GM12878 (cell line): ENCODE measurements at regions of chr4 and their contacts with region 1.

Region 1: DNA sequence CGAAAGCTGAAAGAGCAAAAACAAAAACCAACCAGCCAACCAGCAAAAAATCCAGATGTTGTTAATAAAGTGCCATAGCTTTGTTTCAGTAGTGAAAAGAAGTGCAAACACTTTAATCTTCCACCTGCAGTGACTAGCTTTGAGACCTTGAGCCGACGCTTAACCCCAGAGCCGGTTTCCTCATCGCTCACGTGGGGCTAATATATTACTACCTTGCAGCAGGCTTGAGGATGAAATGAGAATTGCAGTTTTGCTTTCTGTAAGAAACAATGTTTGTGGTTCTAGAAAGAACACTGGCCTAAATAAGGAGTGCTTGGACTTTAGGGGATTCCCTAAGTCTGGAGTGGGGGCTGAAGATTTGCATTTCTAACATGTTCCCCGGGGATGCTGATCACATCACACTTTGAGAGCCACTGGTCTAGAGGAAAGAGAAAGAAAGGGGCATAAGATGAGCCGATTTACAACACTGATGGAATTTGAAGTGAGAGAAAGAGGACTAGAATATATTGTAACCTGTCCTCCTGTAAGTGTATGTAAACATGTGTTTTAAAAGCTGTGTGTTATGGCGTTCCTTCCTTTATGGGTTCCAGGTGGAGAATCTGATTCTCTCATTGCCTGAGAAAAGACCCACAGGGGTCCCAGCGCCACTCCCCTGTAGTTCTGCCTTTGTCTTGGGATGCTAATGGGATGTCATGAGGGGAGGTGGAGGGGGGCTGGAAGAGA is 1.4 kb downstream of the FGF2 start:
- DNase-seq: peak; percentile 80
- ATAC-seq: peak; percentile 93
- H3K4me3 ChIP-seq: peak overlapping the region; percentile 67
- H3K27ac ChIP-seq: peak overlapping the region; percentile 47
- H3K4me1 ChIP-seq: peaks cover 3% of the 10 kb centered on the region; the same call in 1 of the 2 replicates
- H3K27me3 ChIP-seq: no peaks in the 10 kb centered on the region; a peak in 1 of 4 replicates
- CTCF ChIP-seq: peak in 2 of 3 experiments; percentile 8 to 24; a peak in 1 of 6 replicates
- EP300 ChIP-seq: peak in 1 of 2 experiments; percentile 55; a peak in 1 of 4 replicates
- POLR2A ChIP-seq: no peak
- RAD21 ChIP-seq: no peak

Region 2: DNA sequence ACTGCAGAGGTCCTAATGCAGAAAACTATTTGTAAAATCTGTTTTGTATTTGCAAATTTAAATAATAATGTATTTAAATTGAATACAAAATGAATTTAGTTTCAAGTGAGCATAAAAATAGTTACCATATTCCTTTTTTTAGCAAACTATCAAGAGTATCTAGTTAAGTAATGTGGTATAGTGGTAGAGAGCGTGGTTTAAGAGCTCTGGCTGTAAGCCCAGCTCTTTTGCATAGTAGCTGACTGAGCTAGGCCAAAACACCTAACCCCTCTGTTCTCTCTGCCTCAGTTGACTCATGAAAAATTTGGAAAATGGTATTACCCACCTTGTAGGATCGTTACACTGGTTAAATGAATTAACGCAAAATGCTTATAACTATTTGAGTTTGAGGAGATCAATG is 467.3 kb before region 1 on chr4:
- CTCF ChIA-PET with region 1: no interaction called
- POLR2A ChIA-PET with region 1: no interaction called
- RAD21 ChIA-PET with region 1: no interaction called
- SMC1A ChIA-PET with region 1: no interaction called
- in situ Hi-C with region 1: no loop called
- intact Hi-C with region 1: no loop called
- DNase-seq: no peak
- ATAC-seq: no peak
- H3K4me3 ChIP-seq: no peak overlapping the region
- H3K27ac ChIP-seq: no peak overlapping the region
- H3K4me1 ChIP-seq: no peaks in the 10 kb centered on the region
- H3K27me3 ChIP-seq: no peaks in the 10 kb centered on the region
- CTCF ChIP-seq: no peak
- EP300 ChIP-seq: no peak
- POLR2A ChIP-seq: no peak
- RAD21 ChIP-seq: no peak

Region 3: DNA sequence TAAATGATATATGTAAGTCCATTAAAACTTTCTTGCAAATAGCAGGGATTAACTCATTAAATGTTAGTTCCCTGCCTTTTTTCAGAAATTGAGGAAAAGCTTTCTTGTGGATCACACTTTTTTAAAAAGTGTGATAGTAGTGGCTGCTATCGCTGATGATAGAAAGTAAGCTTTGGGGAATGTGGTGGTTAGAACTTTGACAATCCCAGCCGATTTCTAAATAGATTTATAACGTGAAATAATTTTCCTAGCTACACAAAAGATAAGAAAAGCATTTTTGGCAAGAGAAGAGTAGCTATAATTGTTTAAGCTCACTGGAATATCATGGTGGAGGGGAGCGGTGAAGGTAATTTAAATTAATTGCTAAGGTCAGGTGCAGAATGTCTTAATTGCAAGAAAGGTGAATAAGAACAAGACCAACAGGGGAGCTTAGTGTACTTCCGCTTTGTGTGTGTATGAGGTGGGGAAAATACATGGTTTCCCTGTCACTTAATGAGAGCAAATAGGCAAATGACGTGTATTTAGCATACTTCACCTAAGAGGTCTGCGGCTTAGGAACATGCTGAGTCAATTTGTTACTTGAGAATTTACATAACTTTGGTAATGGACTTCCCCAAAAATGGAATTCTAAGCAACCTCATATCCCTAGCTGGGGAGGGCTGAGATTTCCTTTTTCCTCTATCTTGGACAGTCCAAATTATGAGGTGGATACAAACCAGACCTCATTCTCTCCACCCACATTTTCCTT is 195.5 kb before region 1 on chr4:
- CTCF ChIA-PET with region 1: no interaction called
- POLR2A ChIA-PET with region 1: no interaction called
- RAD21 ChIA-PET with region 1: no interaction called
- SMC1A ChIA-PET with region 1: no interaction called
- in situ Hi-C with region 1: no loop called
- intact Hi-C with region 1: loop called (anchors 10 kb)
- DNase-seq: peak; percentile 48
- ATAC-seq: peak; percentile 76
- H3K4me3 ChIP-seq: no peak overlapping the region
- H3K27ac ChIP-seq: no peak overlapping the region
- H3K4me1 ChIP-seq: peaks cover 25% of the 10 kb centered on the region
- H3K27me3 ChIP-seq: no peaks in the 10 kb centered on the region
- CTCF ChIP-seq: no peak
- EP300 ChIP-seq: peak in 1 of 2 experiments; percentile 39; a peak in 1 of 4 replicates
- POLR2A ChIP-seq: no peak
- RAD21 ChIP-seq: no peak

Region 4: GRCh38 chr4:122764821-122765215 is 63.2 kb before region 1 on chr4:
- CTCF ChIA-PET with region 1: no interaction called
- POLR2A ChIA-PET with region 1: no interaction called
- RAD21 ChIA-PET with region 1: no interaction called
- SMC1A ChIA-PET with region 1: no interaction called
- in situ Hi-C with region 1: no loop called
- intact Hi-C with region 1: loop called (anchors 5 kb)
- DNase-seq: no peak
- ATAC-seq: peak; percentile 64
- H3K4me3 ChIP-seq: no peak overlapping the region
- H3K27ac ChIP-seq: no peak overlapping the region
- H3K4me1 ChIP-seq: peaks cover 18% of the 10 kb centered on the region
- H3K27me3 ChIP-seq: no peaks in the 10 kb centered on the region
- CTCF ChIP-seq: no peak
- EP300 ChIP-seq: no peak; a peak in 1 of 4 replicates
- POLR2A ChIP-seq: no peak
- RAD21 ChIP-seq: no peak

Region 5: GRCh38 chr4:122798101-122798500 is 29.9 kb before region 1 on chr4:
- CTCF ChIA-PET with region 1: no interaction called
- POLR2A ChIA-PET with region 1: no interaction called
- RAD21 ChIA-PET with region 1: no interaction called
- SMC1A ChIA-PET with region 1: no interaction called
- in situ Hi-C with region 1: no loop called
- intact Hi-C with region 1: no loop called
- DNase-seq: no peak
- ATAC-seq: peak; percentile 45
- H3K4me3 ChIP-seq: no peak overlapping the region
- H3K27ac ChIP-seq: no peak overlapping the region
- H3K4me1 ChIP-seq: peaks cover 3% of the 10 kb centered on the region
- H3K27me3 ChIP-seq: no peaks in the 10 kb centered on the region; a peak in 1 of 4 replicates
- CTCF ChIP-seq: no peak
- EP300 ChIP-seq: no peak
- POLR2A ChIP-seq: no peak
- RAD21 ChIP-seq: no peak

Region 6: DNA sequence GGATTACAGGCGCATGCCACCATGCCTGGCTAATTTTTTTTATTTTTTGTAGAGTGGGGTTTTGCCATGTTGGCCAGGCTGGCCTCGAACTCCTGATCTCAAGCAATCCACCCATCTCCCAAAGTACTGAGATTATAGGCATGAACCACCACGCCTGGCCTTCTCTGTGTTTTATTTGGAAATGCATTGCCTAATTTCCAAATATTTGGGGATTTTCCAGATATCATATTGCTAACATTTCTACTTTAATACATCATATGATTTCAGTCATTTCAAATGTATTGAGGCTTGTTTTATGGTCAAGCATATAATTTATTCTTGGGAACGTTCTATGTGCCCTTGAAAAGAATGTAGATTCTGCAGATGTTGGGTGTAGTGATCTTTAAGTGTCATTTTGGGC is 37.4 kb after region 1 on chr4:
- CTCF ChIA-PET with region 1: no interaction called
- POLR2A ChIA-PET with region 1: no interaction called
- RAD21 ChIA-PET with region 1: no interaction called
- SMC1A ChIA-PET with region 1: no interaction called
- in situ Hi-C with region 1: no loop called
- intact Hi-C with region 1: no loop called
- DNase-seq: no peak
- ATAC-seq: no peak
- H3K4me3 ChIP-seq: no peak overlapping the region
- H3K27ac ChIP-seq: no peak overlapping the region
- H3K4me1 ChIP-seq: no peaks in the 10 kb centered on the region
- H3K27me3 ChIP-seq: no peaks in the 10 kb centered on the region
- CTCF ChIP-seq: no peak
- EP300 ChIP-seq: no peak
- POLR2A ChIP-seq: no peak
- RAD21 ChIP-seq: no peak